ENCODE measurements at regions of chr13 and their contacts with region 1.

Region 1: DNA sequence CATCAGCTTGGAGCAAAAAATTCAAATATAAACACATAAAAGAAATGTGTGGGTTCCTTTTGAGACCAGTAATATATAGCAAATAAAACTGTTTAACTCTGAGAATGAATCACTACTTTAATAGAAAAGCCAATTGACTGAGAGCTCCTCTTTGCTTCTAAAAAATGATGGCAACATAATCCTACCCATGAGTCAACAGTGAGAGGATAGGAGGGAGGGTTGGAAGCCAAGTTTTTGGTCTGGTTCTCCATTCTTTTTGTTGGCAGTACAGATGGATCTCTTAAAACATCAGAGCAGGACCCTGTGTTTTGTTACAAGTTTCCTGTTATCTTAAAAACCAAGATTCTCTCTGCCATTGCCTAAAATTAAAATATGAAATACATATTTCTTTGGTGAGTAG is 50.0 kb upstream of the POSTN start:
- DNase-seq: peak; percentile 62
- H3K4me3 ChIP-seq: no peak overlapping the region
- H3K27ac ChIP-seq: no peak overlapping the region
- H3K27me3 ChIP-seq: no peaks in the 10 kb centered on the region
- CTCF ChIP-seq: no peak

Region 2: GRCh38 chr13:37534181-37534580 is 114.4 kb before region 1 on chr13:
- CTCF ChIA-PET with region 1: no interaction called
- POLR2A ChIA-PET with region 1: no interaction called
- DNase-seq: peak; percentile 68
- H3K4me3 ChIP-seq: no peak overlapping the region
- H3K27ac ChIP-seq: peak overlapping the region; percentile 68
- H3K27me3 ChIP-seq: no peaks in the 10 kb centered on the region
- CTCF ChIP-seq: no peak

Region 3: DNA sequence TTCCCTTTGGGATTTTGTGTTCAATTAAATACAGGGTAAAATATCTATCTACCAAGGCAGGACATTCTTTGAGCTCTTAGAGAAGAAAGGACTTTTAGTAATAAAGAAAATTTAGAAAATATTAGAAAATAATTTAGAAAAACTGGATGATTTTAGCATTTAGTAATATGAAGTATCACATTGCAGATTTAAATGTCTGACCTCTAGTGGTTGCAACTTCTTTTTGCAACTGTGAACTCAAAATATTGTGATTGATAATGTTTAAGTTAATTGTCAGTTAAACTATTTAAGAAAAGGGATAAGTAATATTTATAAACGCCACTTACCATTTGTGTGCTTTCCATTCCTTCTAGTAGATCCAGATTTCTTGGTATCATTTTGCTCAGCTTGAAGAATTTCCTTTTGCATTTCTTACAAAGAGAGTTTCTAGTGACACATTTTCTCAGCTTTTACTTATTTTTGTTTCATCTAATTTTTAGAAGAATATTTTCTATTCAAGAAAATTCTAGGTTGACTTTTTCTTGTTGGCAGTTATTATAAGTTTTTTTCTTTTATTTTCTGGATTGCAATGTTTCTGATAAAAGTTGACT is 39.8 kb before region 1 on chr13:
- CTCF ChIA-PET with region 1: no interaction called
- POLR2A ChIA-PET with region 1: no interaction called
- DNase-seq: no peak
- H3K4me3 ChIP-seq: no peak overlapping the region
- H3K27ac ChIP-seq: no peak overlapping the region
- H3K27me3 ChIP-seq: no peaks in the 10 kb centered on the region
- CTCF ChIP-seq: peak; percentile 58

Region 4: GRCh38 chr13:37667702-37668101 is 19.1 kb after region 1 on chr13:
- CTCF ChIA-PET with region 1: no interaction called
- POLR2A ChIA-PET with region 1: no interaction called
- DNase-seq: no peak
- H3K4me3 ChIP-seq: no peak overlapping the region
- H3K27ac ChIP-seq: no peak overlapping the region
- H3K27me3 ChIP-seq: no peaks in the 10 kb centered on the region
- CTCF ChIP-seq: no peak

Region 5: DNA sequence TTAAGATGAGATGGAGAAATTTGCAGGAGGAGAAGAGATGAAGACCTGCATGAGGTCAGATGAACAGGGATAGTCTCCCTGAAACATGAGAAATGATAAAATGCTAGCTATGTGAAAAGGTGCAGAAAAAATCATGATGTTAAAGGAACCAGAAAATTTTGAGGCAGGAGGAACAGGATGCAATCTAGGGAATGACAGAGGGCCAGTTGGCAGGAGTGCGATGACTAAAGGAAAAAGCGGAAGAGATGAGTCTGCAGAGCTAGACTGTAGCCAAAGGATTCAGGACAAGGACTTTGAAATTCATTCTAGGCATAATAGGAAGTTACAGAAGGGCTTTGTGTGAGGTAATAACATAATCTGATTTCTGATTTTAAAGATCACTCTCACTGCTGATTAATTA is 143.1 kb after region 1 on chr13:
- CTCF ChIA-PET with region 1: no interaction called
- POLR2A ChIA-PET with region 1: interaction called, 15 read pairs
- DNase-seq: no peak
- H3K4me3 ChIP-seq: no peak overlapping the region
- H3K27ac ChIP-seq: no peak overlapping the region
- H3K27me3 ChIP-seq: no peaks in the 10 kb centered on the region
- CTCF ChIP-seq: no peak